Motor neuron (in vitro differentiated cells): ENCODE measurements at regions of chr1 and their contacts with region 1.

Region 1: DNA sequence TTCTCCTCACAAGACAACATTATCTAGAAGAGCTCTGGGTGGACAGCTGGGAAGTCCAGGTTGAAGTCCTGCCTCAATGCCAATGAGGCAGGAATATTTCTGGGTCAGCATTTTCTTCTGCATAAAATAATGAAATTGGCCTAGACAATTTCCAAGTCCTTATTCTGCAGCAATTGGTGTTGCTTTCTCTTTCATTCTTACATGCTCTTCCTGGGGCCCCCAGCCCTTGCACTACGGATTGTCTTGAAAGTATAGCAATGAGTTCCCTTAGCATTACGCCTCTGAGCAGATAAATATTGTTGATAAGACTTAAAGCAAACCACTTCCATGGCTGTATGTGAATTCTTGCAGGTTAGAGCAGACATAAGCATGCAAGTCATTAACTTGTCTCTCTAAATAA is 188.5 kb downstream of the TGFBR3 start:
- ATAC-seq: no peak
- H3K4me3 ChIP-seq: no peak overlapping the region
- H3K27ac ChIP-seq: no peak overlapping the region
- H3K4me1 ChIP-seq: no peaks in the 10 kb centered on the region

Region 2: GRCh38 chr1:91511386-91511785 is 186.0 kb before region 1 on chr1:
- in situ Hi-C with region 1: no loop called
- ATAC-seq: peak in 3 of 8 experiments; percentile 59 to 76 (median 71)
- H3K4me3 ChIP-seq: no peak overlapping the region
- H3K27ac ChIP-seq: no peak overlapping the region
- H3K4me1 ChIP-seq: no peaks in the 10 kb centered on the region

Region 3: DNA sequence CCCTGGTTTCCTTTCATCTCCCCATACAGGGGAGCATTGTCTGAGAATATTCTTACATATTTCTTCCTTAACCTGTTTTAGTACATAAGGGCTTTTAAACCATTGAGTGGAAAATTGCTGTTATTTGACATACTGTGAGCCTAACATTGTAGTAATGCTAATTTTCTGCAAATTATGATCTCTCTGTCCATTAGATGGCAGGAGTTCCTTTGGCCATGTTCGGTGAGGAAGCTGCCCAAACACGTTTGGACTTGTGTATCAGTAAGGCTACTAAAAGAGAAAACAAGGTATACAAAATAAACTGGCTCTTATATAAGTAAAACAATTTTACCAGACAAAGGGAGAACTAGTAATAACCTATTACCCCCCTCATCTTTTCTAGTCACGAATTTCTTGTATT is 167.6 kb before region 1 on chr1:
- in situ Hi-C with region 1: loop called in 1 of 9 experiments (anchors 25 kb)
- ATAC-seq: peak in 3 of 8 experiments; percentile 37 to 69 (median 69)
- H3K4me3 ChIP-seq: no peak overlapping the region
- H3K27ac ChIP-seq: no peak overlapping the region
- H3K4me1 ChIP-seq: no peaks in the 10 kb centered on the region

Region 4: GRCh38 chr1:91635763-91636162 is 61.7 kb before region 1 on chr1:
- in situ Hi-C with region 1: no loop called
- ATAC-seq: no peak
- H3K4me3 ChIP-seq: no peak overlapping the region
- H3K27ac ChIP-seq: no peak overlapping the region
- H3K4me1 ChIP-seq: no peaks in the 10 kb centered on the region

Region 5: GRCh38 chr1:91830242-91831131 is 133.1 kb after region 1 on chr1:
- in situ Hi-C with region 1: no loop called
- ATAC-seq: peak; percentile 40 to 97 (median 80)
- H3K4me3 ChIP-seq: no peak overlapping the region
- H3K27ac ChIP-seq: no peak overlapping the region
- H3K4me1 ChIP-seq: peaks cover 0 to 14% of the 10 kb centered on the region in 2 donors

Region 6: DNA sequence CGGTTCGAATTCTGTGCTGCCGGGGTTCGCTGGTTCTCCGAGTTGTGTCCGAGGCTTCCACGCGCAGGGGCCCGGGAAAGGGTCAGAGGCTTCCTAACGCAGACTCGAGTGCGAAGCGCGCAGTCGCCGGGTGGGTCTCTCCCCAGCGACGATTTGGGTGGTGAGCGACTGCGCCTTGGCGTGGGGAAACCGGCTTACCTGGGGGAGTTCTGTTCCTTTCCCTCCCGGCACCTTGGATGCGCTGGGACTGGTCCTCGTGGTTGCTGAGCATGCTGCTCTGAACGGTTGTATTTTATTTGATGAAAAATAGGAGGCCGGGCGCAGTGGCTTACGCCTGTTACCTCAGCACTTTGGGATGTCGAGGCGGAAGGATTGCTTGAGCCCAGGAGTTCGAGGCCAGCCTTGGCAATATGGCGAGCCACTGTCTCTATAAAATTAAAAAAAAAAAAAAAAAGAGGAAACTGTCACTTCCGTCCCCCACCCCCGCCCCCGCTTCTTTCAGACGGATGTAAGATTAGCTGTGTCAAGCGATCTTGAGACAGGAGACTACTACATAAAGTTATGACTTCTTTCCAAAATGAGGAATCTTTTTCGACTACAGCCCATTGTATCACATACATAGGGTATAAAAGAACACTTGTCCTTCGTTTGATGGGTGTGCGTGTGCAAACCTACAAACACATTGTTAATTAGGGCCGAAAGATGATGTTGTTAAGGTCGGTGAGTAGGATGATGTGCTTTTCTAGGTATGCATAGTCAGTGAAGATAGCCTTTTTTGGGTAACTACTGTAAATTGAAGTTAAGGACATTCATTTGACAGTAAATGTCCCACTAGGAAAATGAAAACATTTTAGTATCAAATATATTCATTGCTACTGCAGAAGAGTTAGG is 1483.6 kb after region 1 on chr1 and contains the start of gene CCDC18:
- in situ Hi-C with region 1: no loop called
- ATAC-seq: peak in 3 of 8 experiments; percentile 5 to 10 (median 9)
- H3K4me3 ChIP-seq: peak within 1 kb of the TSS; percentile 55 to 82 (median 70)
- H3K27ac ChIP-seq: peak within 1 kb of the TSS; percentile 45 to 78
- H3K4me1 ChIP-seq: peaks cover 0 to 13% of the 10 kb centered on the region in 2 donors
- total RNA-seq, gene CCDC18: 5.3 to 49.0 (median 14.5) TPM